ENCODE measurements at regions of chr6 and their contacts with region 1.

Region 1: GRCh38 chr6:131038597-131039344 is 24.3 kb downstream of the EPB41L2 start:
- DNase-seq: peak; percentile 96
- ATAC-seq: peak; percentile 98
- H3K4me3 ChIP-seq: peak overlapping the region; percentile 17 to 33 (median 27); a peak in 4 of 6 replicates
- H3K27ac ChIP-seq: peak overlapping the region; percentile 83
- H3K4me1 ChIP-seq: peaks cover 98% of the 10 kb centered on the region
- H3K27me3 ChIP-seq: no peaks in the 10 kb centered on the region
- CTCF ChIP-seq: no peak
- EP300 ChIP-seq: peak; percentile 58 to 98; a peak in 3 of 4 replicates
- POLR2A ChIP-seq: no peak
- RAD21 ChIP-seq: no peak

Region 2: GRCh38 chr6:130434174-130434873 is 604.4 kb before region 1 on chr6:
- CTCF ChIA-PET with region 1: no interaction called
- POLR2A ChIA-PET with region 1: no interaction called
- in situ Hi-C with region 1: no loop called
- intact Hi-C with region 1: no loop called
- DNase-seq: no peak
- ATAC-seq: no peak
- H3K4me3 ChIP-seq: no peak overlapping the region
- H3K27ac ChIP-seq: no peak overlapping the region
- H3K4me1 ChIP-seq: no peaks in the 10 kb centered on the region
- H3K27me3 ChIP-seq: no peaks in the 10 kb centered on the region
- CTCF ChIP-seq: no peak
- EP300 ChIP-seq: no peak
- POLR2A ChIP-seq: no peak
- RAD21 ChIP-seq: no peak

Region 3: DNA sequence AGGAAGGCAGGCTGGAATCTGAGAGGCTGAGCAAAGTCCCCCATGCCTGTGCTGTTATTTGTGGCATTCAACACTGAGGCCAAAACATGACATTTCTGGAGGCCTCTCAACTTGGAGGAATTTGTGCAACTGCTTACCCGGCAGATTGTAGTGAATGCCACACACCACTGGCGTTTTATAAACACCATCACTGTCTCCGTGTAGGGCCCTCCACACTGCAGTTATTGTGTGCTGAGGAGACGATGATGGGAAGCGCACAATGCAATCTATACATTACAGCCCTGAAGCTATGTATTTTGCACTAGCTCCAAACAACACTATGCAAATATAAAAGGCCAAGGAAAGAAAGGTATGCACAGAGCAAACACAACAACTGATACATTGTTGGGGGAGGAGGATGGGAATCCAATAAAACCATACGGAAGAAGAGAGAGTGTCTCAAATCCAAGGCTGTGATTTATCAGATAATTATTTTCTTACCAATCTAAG is 105.0 kb before region 1 on chr6:
- CTCF ChIA-PET with region 1: no interaction called
- POLR2A ChIA-PET with region 1: interaction called, 6 read pairs
- in situ Hi-C with region 1: no loop called
- intact Hi-C with region 1: loop called (anchors 2 kb)
- DNase-seq: peak; percentile 98
- ATAC-seq: peak; percentile 97
- H3K4me3 ChIP-seq: peak overlapping the region in 2 of 3 experiments; percentile 34 to 47; a peak in 3 of 6 replicates
- H3K27ac ChIP-seq: peak overlapping the region; percentile 73
- H3K4me1 ChIP-seq: peaks cover 75% of the 10 kb centered on the region
- H3K27me3 ChIP-seq: no peaks in the 10 kb centered on the region
- CTCF ChIP-seq: no peak
- EP300 ChIP-seq: peak; percentile 84 to 95; a peak in 3 of 4 replicates
- POLR2A ChIP-seq: no peak
- RAD21 ChIP-seq: no peak; the same call in none of the 2 replicates

Region 4: DNA sequence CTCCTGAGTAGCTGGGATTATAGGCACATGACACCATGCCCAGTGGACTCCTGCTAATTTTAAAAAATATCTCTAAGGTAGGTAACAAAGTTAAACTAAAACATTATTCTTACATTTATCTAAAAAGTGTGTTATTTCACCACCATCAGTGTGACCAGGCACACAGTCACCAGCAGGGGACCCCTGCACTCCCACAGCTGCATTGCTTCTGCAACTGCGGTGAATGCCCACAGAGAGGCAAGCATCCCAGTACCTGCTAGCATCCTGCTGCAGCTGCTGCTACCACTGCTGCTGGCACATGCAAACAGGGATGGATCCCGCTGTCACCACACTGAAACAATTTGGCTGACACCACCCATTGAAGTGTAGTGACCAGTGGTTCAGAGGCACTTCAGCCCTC is 46.2 kb after region 1 on chr6:
- CTCF ChIA-PET with region 1: no interaction called
- POLR2A ChIA-PET with region 1: no interaction called
- in situ Hi-C with region 1: no loop called
- intact Hi-C with region 1: loop called (anchors 1 kb)
- DNase-seq: peak; percentile 49
- ATAC-seq: peak; percentile 100
- H3K4me3 ChIP-seq: no peak overlapping the region
- H3K27ac ChIP-seq: no peak overlapping the region
- H3K4me1 ChIP-seq: peaks cover 18% of the 10 kb centered on the region; the same call in 1 of the 2 replicates
- H3K27me3 ChIP-seq: no peaks in the 10 kb centered on the region; a peak in 1 of 5 replicates
- CTCF ChIP-seq: peak; percentile 63
- EP300 ChIP-seq: no peak
- POLR2A ChIP-seq: no peak
- RAD21 ChIP-seq: peak; percentile 71

Measured in HepG2 (cell line).